Calu3 (cell line): ENCODE measurements at regions of chr21 and their contacts with region 1.

Region 1: GRCh38 chr21:37636152-37636860 is 269.7 kb downstream of the DYRK1A start:
- DNase-seq: peak; percentile 30
- H3K4me3 Mint-ChIP-seq: peak overlapping the region; percentile 49
- H3K27ac Mint-ChIP-seq: peak overlapping the region; percentile 57
- H3K4me1 Mint-ChIP-seq: peaks cover 46% of the 10 kb centered on the region
- H3K27me3 Mint-ChIP-seq: no peaks in the 10 kb centered on the region
- CTCF ChIP-seq: no peak

Region 2: DNA sequence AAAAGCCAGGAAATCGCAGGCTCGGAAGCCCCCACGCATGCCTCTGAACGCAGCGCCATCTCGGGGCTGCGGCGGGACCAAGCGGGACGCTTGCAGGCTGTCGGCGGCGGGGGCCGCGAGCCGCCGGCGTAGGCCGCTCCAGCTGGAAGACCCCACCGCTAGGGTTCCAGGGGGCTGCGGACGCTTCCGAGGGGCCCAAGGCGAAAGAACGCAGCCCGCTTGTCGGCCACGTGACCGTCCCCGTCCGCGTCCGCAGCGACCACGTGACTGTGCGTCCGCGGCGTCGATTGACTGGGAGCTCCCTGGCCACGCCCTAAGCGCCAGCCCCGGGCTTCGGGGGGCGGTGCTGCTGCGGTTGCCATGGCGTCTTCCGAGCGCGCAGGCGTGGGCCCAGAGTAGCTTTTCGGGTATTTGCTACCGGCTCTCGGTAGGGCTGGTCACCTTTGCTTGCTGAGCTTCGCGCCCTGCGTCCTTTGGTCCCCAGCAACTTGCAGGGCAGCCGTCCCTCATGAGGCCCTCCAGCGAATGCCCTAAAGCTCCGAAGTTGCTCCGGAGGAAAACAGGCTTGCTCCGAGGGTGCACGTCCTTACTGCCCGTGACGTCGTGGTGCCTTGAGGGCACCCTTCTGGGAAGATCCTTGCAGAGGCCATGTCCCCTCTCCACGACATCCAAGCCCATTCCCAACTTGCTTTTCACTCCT is 72.5 kb before region 1 on chr21:
- CTCF ChIA-PET with region 1: no interaction called
- intact Hi-C with region 1: loop called (anchors 2 kb)
- DNase-seq: peak; percentile 92
- H3K4me3 Mint-ChIP-seq: peak overlapping the region; percentile 80
- H3K27ac Mint-ChIP-seq: peak overlapping the region; percentile 98
- H3K4me1 Mint-ChIP-seq: peaks cover 15% of the 10 kb centered on the region
- H3K27me3 Mint-ChIP-seq: peaks cover 5% of the 10 kb centered on the region
- CTCF ChIP-seq: no peak

Region 3: DNA sequence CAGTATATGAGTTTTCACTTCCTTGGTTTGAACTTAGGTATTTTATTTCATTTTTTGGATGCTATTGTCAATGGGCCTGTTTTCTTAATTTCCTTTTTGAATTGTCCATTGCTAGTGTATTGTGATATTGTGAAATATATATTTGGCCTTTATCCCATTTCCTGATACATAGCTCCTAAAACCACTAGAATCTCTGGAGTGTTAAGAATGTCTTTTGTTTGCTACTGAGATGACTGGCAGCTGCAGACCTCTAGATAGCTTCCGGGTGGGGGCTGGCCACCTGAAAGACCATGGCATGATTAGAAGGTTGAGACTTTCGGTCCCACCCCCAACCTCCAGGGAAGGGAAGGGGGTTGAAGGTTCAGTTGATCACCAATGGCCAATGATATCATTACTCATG is 34.6 kb after region 1 on chr21:
- CTCF ChIA-PET with region 1: no interaction called
- intact Hi-C with region 1: loop called (anchors 5 kb)
- DNase-seq: peak; percentile 66
- H3K4me3 Mint-ChIP-seq: no peak overlapping the region
- H3K27ac Mint-ChIP-seq: no peak overlapping the region
- H3K4me1 Mint-ChIP-seq: peaks cover 48% of the 10 kb centered on the region
- H3K27me3 Mint-ChIP-seq: no peaks in the 10 kb centered on the region
- CTCF ChIP-seq: no peak